AG04449 (cell line): ENCODE measurements at regions of chr15 and their contacts with region 1.

Region 1: GRCh38 chr15:81400640-81401236 is 26.7 kb upstream of the TMC3 start:
- DNase-seq: no peak
- H3K4me3 ChIP-seq: no peak overlapping the region
- CTCF ChIP-seq: peak; percentile 65

Region 2: DNA sequence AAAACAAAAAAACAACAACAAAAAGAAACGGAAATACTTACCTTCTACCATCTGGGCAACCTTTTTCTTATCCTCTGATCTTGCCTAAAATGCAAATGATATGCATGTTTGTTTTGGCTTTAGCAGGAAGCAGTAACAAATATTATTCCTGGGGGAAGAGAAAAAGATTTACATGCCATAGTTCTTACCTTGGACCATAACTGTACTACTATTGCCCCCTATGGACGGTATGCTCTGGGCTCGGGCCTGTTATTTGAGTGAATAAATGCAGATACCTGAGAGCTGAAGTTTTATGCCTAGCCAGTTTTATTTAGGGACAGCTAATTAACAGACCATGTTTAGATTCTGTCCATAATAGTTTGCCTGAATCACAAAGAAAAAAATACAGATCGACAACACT is 64.2 kb before region 1 on chr15:
- CTCF ChIA-PET with region 1: interaction called, 15 read pairs
- POLR2A ChIA-PET with region 1: no interaction called
- DNase-seq: no peak
- H3K4me3 ChIP-seq: no peak overlapping the region
- CTCF ChIP-seq: peak; percentile 37

Region 3: GRCh38 chr15:81386947-81387346 is 13.8 kb before region 1 on chr15:
- CTCF ChIA-PET with region 1: interaction called, 25 read pairs
- POLR2A ChIA-PET with region 1: no interaction called
- DNase-seq: no peak
- H3K4me3 ChIP-seq: no peak overlapping the region
- CTCF ChIP-seq: no peak

Region 4: DNA sequence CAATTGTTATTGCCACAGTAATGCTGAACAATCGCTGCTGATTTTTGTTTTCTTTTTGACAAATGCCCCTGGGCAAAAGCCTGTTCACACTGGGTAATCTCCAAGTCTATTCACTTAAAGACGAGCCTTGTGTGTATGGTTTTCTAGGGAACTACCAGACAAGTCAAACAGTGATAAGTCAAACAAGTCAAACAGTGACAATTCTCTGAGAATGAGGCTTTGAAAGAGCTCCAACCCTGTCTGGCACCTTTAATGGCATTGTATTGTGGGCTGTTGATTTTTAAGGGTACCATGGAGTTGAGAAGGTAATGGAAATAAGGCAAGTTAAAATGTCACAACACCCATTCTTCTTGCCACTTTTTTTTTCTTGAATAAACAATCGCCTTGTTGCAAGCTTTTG is 32.7 kb after region 1 on chr15:
- CTCF ChIA-PET with region 1: no interaction called
- POLR2A ChIA-PET with region 1: no interaction called
- DNase-seq: no peak
- H3K4me3 ChIP-seq: no peak overlapping the region
- CTCF ChIP-seq: no peak